ENCODE measurements at regions of chr2 and their contacts with region 1.

Region 1: GRCh38 chr2:108607706-108608301 is 73.5 kb downstream of the LIMS1 start:
- DNase-seq: no peak
- H3K4me3 Mint-ChIP-seq: no peak overlapping the region
- H3K27ac Mint-ChIP-seq: peak overlapping the region; percentile 53
- H3K4me1 Mint-ChIP-seq: peaks cover 84% of the 10 kb centered on the region
- H3K27me3 Mint-ChIP-seq: no peaks in the 10 kb centered on the region

Region 2: DNA sequence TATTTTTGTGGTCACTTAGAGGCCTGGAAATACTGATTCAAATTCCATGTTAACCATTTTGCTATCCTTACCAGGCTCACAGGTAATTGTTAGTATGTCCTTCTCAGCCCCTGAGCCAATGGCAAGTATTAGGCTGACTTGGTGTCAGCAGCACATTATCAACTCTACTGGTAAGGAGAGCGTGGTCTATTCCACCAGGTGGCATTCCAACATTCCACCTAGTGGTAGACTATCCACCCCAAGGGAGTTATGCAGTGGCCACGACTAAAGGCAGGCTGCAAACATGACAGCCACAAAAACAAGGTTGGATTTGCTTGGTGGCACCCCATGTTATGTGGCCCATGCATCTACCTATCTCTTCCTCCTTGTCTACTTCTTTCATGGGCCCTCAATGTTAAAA is 190.5 kb before region 1 on chr2:
- intact Hi-C with region 1: no loop called
- DNase-seq: no peak
- H3K4me3 Mint-ChIP-seq: no peak overlapping the region
- H3K27ac Mint-ChIP-seq: no peak overlapping the region
- H3K4me1 Mint-ChIP-seq: no peaks in the 10 kb centered on the region
- H3K27me3 Mint-ChIP-seq: peaks cover 4% of the 10 kb centered on the region

Region 3: GRCh38 chr2:108594132-108594981 is 13.4 kb before region 1 on chr2:
- intact Hi-C with region 1: loop called (anchors 1 kb)
- DNase-seq: no peak
- H3K4me3 Mint-ChIP-seq: peak overlapping the region; percentile 72
- H3K27ac Mint-ChIP-seq: peak overlapping the region; percentile 92
- H3K4me1 Mint-ChIP-seq: peaks cover 63% of the 10 kb centered on the region
- H3K27me3 Mint-ChIP-seq: no peaks in the 10 kb centered on the region

Region 4: GRCh38 chr2:108621087-108621559 is 13.3 kb after region 1 on chr2:
- intact Hi-C with region 1: loop called (anchors 1 kb)
- DNase-seq: peak; percentile 75
- H3K4me3 Mint-ChIP-seq: peak overlapping the region; percentile 97
- H3K27ac Mint-ChIP-seq: peak overlapping the region; percentile 93
- H3K4me1 Mint-ChIP-seq: peaks cover 86% of the 10 kb centered on the region
- H3K27me3 Mint-ChIP-seq: no peaks in the 10 kb centered on the region

Region 5: DNA sequence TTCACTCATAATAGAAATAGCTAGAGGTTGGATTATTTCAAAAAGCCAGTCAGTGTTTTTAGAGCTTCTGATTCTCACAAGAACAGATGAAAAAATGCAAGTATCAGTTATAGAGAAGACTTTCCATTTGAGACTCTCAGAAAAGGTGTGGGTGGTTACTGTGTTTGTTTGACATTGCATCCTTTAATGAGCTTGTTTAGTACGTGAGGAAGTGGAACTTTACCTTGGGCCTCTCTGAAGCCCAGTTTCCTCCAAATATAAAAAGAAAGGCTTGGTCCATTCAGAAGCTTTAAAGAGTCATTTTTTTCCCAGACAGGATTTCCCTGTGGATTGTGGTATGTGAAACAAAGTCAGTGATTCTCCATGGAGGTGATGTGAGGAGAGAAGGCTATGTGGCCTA is 21.6 kb after region 1 on chr2:
- intact Hi-C with region 1: loop called (anchors 1 kb)
- DNase-seq: no peak
- H3K4me3 Mint-ChIP-seq: peak overlapping the region; percentile 73
- H3K27ac Mint-ChIP-seq: peak overlapping the region; percentile 97
- H3K4me1 Mint-ChIP-seq: peaks cover 84% of the 10 kb centered on the region
- H3K27me3 Mint-ChIP-seq: no peaks in the 10 kb centered on the region

Region 6: GRCh38 chr2:108637304-108637669 is 29.5 kb after region 1 on chr2:
- intact Hi-C with region 1: loop called (anchors 1 kb)
- DNase-seq: no peak
- H3K4me3 Mint-ChIP-seq: no peak overlapping the region
- H3K27ac Mint-ChIP-seq: peak overlapping the region; percentile 67
- H3K4me1 Mint-ChIP-seq: peaks cover 77% of the 10 kb centered on the region
- H3K27me3 Mint-ChIP-seq: no peaks in the 10 kb centered on the region

Region 7: GRCh38 chr2:108719149-108720044 is 111.6 kb after region 1 on chr2 and contains the start of gene RANBP2:
- intact Hi-C with region 1: loop called (anchors 1 kb)
- DNase-seq: peak; percentile 92
- H3K4me3 Mint-ChIP-seq: peak within 1 kb of the TSS; percentile 94
- H3K27ac Mint-ChIP-seq: peak within 1 kb of the TSS; percentile 99
- H3K4me1 Mint-ChIP-seq: peaks cover 16% of the 10 kb centered on the region
- H3K27me3 Mint-ChIP-seq: no peaks in the 10 kb centered on the region
- total RNA-seq, gene RANBP2: 68.0 and 74.1 TPM in 2 replicates

Region 8: GRCh38 chr2:110149330-110150220 is 1541.8 kb after region 1 on chr2:
- intact Hi-C with region 1: no loop called
- DNase-seq: no peak
- H3K4me3 Mint-ChIP-seq: no peak overlapping the region
- H3K27ac Mint-ChIP-seq: peak overlapping the region; percentile 61
- H3K4me1 Mint-ChIP-seq: peaks cover 11% of the 10 kb centered on the region
- H3K27me3 Mint-ChIP-seq: no peaks in the 10 kb centered on the region